Activated CD4-positive, alpha-beta T cell treated with anti-CD3 and anti-CD28 coated beads, Interleukin-2, amount 10 ng/mL, durations not matched to agents 24 days and 14 days (primary cell): ENCODE measurements at regions of chr6 and their contacts with region 1.

Region 1: GRCh38 chr6:35452186-35453090 is at the start of gene FANCE:
- DNase-seq: peak; percentile 99
- H3K4me3 Mint-ChIP-seq: peak within 1 kb of the TSS; percentile 86
- H3K27ac Mint-ChIP-seq: peak within 1 kb of the TSS; percentile 66
- H3K4me1 Mint-ChIP-seq: peaks cover 35% of the 10 kb centered on the region
- H3K27me3 Mint-ChIP-seq: peaks cover 9% of the 10 kb centered on the region
- total RNA-seq, gene FANCE: 19.6 and 22.1 TPM in 2 replicates

Region 2: DNA sequence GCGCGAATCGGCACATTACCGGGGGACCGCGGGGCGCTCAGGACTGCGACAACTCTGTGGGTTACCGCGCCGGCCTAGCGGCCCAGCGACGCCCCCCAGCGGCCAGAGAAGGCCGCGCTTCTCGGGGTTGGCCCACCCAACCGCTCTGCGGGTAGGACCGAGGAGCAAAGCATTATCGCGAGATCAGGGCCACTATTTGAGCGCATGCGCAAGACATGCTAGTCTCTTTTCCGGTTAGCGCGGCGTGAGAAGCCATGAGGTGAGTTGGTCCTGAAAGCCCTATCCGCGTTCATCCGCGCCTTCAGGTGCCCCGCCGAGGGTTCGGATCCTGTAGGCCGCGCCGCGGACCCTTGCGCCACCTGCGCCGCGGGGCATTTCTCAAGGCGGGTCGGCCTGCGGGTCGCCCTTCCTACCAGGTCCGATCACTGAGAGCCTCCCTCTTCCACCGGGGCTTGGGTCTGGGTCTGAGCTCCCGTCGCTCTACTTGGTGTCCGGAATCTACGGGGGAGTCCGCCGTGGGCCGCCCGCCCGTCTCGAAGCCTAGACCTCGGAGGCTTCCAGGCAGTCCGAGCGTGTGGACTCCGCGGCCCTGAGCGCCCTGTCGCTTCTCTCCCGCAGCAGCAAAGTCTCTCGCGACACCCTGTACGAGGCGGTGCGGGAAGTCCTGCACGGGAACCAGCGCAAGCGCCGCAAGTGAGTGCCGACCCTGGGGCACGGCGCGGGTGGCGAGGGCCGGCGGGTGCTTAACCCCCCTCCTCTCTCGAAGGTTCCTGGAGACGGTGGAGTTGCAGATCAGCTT is 15.9 kb after region 1 on chr6 and contains the start of gene RPL10A:
- intact Hi-C with region 1: loop called (anchors 1 kb)
- DNase-seq: peak; percentile 98
- H3K4me3 Mint-ChIP-seq: peak within 1 kb of the TSS; percentile 97
- H3K27ac Mint-ChIP-seq: peak within 1 kb of the TSS; percentile 98
- H3K4me1 Mint-ChIP-seq: peaks cover 39% of the 10 kb centered on the region
- H3K27me3 Mint-ChIP-seq: no peaks in the 10 kb centered on the region
- total RNA-seq, gene RPL10A: 1,702 and 1,710 TPM in 2 replicates

Region 3: GRCh38 chr6:35496841-35497570 is 44.6 kb after region 1 on chr6 and contains the start of gene TEAD3:
- intact Hi-C with region 1: loop called (anchors 5 kb)
- DNase-seq: peak; percentile 89
- H3K4me3 Mint-ChIP-seq: peak within 1 kb of the TSS; percentile 82
- H3K27ac Mint-ChIP-seq: peak within 1 kb of the TSS; percentile 83
- H3K4me1 Mint-ChIP-seq: peaks cover 15% of the 10 kb centered on the region
- H3K27me3 Mint-ChIP-seq: peaks cover 43% of the 10 kb centered on the region
- total RNA-seq, gene TEAD3: 1.7 and 2.2 TPM in 2 replicates